ENCODE measurements at regions of chr6 and their contacts with region 1.

Region 1: GRCh38 chr6:1554476-1555310 is 55.0 kb upstream of the FOXC1 start:
- DNase-seq: peak; percentile 58 to 78 (median 72)
- H3K4me3 ChIP-seq: peak overlapping the region; percentile 42 to 60
- H3K4me3 Mint-ChIP-seq: peak overlapping the region; percentile 84 to 91 (median 89)
- H3K27ac ChIP-seq: peak overlapping the region; percentile 44
- H3K27ac Mint-ChIP-seq: peak overlapping the region; percentile 14 to 92 (median 85)
- H3K4me1 ChIP-seq: peaks cover 27% of the 10 kb centered on the region
- H3K4me1 Mint-ChIP-seq: peaks cover 12 to 41% (median 23%) of the 10 kb centered on the region in 4 donors
- H3K27me3 ChIP-seq: no peaks in the 10 kb centered on the region
- H3K27me3 Mint-ChIP-seq: peaks cover 4 to 7% of the 10 kb centered on the region in 2 donors

Region 2: DNA sequence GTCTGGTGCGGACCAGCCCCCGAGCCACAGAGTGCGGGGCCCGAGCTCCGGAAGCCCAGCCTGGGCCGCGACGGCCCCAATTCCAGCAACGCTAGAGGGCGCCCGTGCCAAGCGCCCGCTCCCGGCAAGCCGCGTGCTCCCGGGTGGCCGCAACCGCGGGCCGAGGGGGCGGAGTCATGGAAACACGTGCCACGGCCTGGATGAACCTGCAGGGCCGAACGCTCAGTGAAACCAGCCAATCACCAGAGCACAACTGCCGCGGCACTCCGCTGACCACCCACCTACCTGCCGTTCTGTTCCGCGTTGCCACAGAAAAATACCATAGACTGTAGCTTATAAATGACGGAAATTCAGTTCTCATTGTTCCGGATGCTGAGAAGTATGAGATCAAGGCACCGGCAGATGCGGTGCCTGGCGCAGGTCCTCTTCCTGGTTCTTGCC is 30.6 kb before region 1 on chr6:
- CTCF ChIA-PET with region 1: interaction called, 688 read pairs
- POLR2A ChIA-PET with region 1: interaction called, 139 read pairs
- intact Hi-C with region 1: loop called (anchors 1 kb)
- DNase-seq: peak; percentile 75 to 83 (median 77)
- H3K4me3 ChIP-seq: peak overlapping the region in 1 of 2 donors; percentile 20
- H3K4me3 Mint-ChIP-seq: peak overlapping the region; percentile 75 to 83 (median 80)
- H3K27ac ChIP-seq: peak overlapping the region; percentile 36
- H3K27ac Mint-ChIP-seq: peak overlapping the region; percentile 78 to 93 (median 85)
- H3K4me1 ChIP-seq: peaks cover 51% of the 10 kb centered on the region
- H3K4me1 Mint-ChIP-seq: peaks cover 27 to 55% (median 49%) of the 10 kb centered on the region in 4 donors
- H3K27me3 ChIP-seq: no peaks in the 10 kb centered on the region
- H3K27me3 Mint-ChIP-seq: peaks cover 10% of the 10 kb centered on the region in 2 donors

Region 3: DNA sequence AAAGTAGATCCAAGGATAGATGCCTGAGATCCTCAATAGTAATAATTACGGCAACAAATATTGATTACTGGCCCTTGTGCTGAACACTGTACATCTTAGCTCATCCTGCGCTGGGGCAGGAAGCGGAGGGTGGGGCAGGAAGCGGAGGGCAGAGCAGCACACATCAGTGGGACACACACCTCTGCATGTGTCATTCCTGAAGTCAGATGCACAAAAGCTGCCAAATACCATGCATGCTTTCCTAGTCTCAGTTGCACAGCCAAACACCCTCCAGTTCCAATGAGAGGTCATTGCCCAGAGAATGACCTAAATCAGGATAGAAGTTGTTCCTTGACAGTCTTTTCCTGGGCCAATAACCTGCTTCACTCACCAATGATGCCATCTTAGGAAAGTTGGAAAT is 19.4 kb before region 1 on chr6:
- CTCF ChIA-PET with region 1: interaction called, 688 read pairs
- POLR2A ChIA-PET with region 1: interaction called, 8 read pairs
- intact Hi-C with region 1: no loop called
- DNase-seq: peak; percentile 25 to 59 (median 44)
- H3K4me3 ChIP-seq: no peak overlapping the region
- H3K4me3 Mint-ChIP-seq: peak overlapping the region in 7 of 8 donors; percentile 50 to 83 (median 76)
- H3K27ac ChIP-seq: peak overlapping the region; percentile 19
- H3K27ac Mint-ChIP-seq: peak overlapping the region; percentile 28 to 92 (median 66)
- H3K4me1 ChIP-seq: peaks cover 49% of the 10 kb centered on the region
- H3K4me1 Mint-ChIP-seq: peaks cover 16 to 25% (median 18%) of the 10 kb centered on the region in 4 donors
- H3K27me3 ChIP-seq: no peaks in the 10 kb centered on the region
- H3K27me3 Mint-ChIP-seq: no peaks in the 10 kb centered on the region

Region 4: GRCh38 chr6:1609648-1610496 is 55.2 kb after region 1 on chr6 and contains the start of gene FOXC1:
- CTCF ChIA-PET with region 1: no interaction called
- POLR2A ChIA-PET with region 1: no interaction called
- intact Hi-C with region 1: no loop called
- DNase-seq: peak in 2 of 5 donors; percentile 13 to 17
- H3K4me3 ChIP-seq: peak within 1 kb of the TSS in 1 of 2 donors; percentile 49
- H3K4me3 Mint-ChIP-seq: peak within 1 kb of the TSS; percentile 80 to 89 (median 84)
- H3K27ac ChIP-seq: no peak within 1 kb of the TSS
- H3K27ac Mint-ChIP-seq: peak within 1 kb of the TSS in 2 of 7 donors; percentile 60 to 79
- H3K4me1 ChIP-seq: peaks cover 58% of the 10 kb centered on the region
- H3K4me1 Mint-ChIP-seq: peaks cover 28 to 68% (median 41%) of the 10 kb centered on the region in 4 donors
- H3K27me3 ChIP-seq: peaks cover 65% of the 10 kb centered on the region
- H3K27me3 Mint-ChIP-seq: peaks cover 52 to 55% of the 10 kb centered on the region in 2 donors
- total RNA-seq, gene FOXC1: not detected

Region 5: DNA sequence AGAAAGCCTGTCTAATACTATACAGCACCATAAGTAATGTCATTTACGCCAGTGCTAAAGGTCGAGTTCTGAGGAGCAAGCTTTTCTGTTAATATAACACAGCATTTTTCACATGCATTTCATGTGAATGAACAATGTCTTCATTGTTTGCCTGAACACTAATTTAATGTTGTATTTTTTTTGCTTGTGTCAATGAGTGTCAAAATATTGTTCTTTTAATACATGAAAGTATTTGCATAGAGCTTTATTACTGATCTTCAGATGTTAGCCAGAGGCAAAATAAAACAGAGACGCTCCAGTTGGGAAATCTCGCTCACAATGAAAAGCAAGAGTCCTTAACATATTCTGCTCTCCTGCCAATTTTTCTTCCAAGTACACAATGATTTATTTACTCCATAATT is 206.8 kb after region 1 on chr6:
- CTCF ChIA-PET with region 1: no interaction called
- POLR2A ChIA-PET with region 1: no interaction called
- intact Hi-C with region 1: no loop called
- DNase-seq: no peak
- H3K4me3 ChIP-seq: no peak overlapping the region
- H3K4me3 Mint-ChIP-seq: no peak overlapping the region
- H3K27ac ChIP-seq: no peak overlapping the region
- H3K27ac Mint-ChIP-seq: no peak overlapping the region
- H3K4me1 ChIP-seq: no peaks in the 10 kb centered on the region
- H3K4me1 Mint-ChIP-seq: no peaks in the 10 kb centered on the region
- H3K27me3 ChIP-seq: no peaks in the 10 kb centered on the region
- H3K27me3 Mint-ChIP-seq: no peaks in the 10 kb centered on the region

Measured in CD4-positive, alpha-beta memory T cell (primary cell).